Testis (tissue), 5 donors: ENCODE measurements at regions of chr10 and their contacts with region 1.

Region 1: DNA sequence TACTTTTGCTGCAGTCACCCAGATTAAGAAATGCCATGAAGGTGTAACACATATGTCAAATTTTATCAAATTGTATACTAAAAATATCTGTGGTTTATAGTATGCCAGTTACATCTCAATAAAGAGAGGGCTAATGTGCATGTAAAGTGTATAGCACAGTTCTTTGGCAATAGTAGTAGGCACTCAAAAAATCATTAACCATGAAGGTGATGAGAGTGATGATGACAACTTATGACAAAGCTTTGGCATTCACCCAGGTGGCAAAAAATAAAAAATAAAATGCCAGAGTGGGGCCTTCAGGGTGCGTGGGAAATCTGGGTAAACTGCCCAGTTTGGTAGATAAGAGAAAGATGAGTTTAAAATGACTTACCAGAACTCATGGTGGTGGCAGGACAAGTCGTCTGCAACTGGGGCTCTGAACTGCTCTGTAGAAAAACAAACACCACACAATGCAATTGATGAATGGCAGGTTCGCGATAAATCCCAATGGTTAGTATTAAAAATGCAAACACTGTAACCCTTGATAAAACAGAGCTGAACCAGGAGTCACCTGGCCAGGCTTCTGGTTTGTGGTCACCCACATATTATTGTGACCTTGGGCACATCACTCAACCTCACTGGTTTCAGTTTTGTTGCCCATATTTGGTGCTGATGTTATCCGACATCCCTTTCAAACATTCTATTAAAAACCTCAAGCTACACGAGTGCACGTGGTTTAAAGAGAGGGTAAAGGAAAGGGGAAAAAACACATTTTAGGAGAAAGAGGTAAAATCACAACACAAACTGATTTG is 120.2 kb downstream of the SORBS1 start:
- DNase-seq: no peak
- H3K4me3 ChIP-seq: no peak overlapping the region
- H3K27ac ChIP-seq: no peak overlapping the region
- H3K4me1 ChIP-seq: peaks cover 12% of the 10 kb centered on the region
- H3K27me3 ChIP-seq: no peaks in the 10 kb centered on the region
- CTCF ChIP-seq: no peak
- POLR2A ChIP-seq: no peak

Region 2: GRCh38 chr10:95474228-95475002 is 33.5 kb after region 1 on chr10:
- intact Hi-C with region 1: loop called (anchors 5 kb)
- DNase-seq: peak; percentile 28
- H3K4me3 ChIP-seq: no peak overlapping the region
- H3K27ac ChIP-seq: peak overlapping the region; percentile 82 to 89
- H3K4me1 ChIP-seq: peaks cover 35% of the 10 kb centered on the region
- H3K27me3 ChIP-seq: no peaks in the 10 kb centered on the region
- CTCF ChIP-seq: no peak
- POLR2A ChIP-seq: no peak